CD8-positive, alpha-beta T cell (primary cell): ENCODE measurements at regions of chr17 and their contacts with region 1.

Region 1: GRCh38 chr17:64281962-64282727 is 19.1 kb upstream of the TEX2 start:
- DNase-seq: peak in 8 of 9 experiments; percentile 25 to 79 (median 51)
- ATAC-seq: peak; percentile 77
- H3K4me3 ChIP-seq: no peak overlapping the region
- H3K4me3 Mint-ChIP-seq: no peak overlapping the region
- H3K27ac ChIP-seq: no peak overlapping the region
- H3K27ac Mint-ChIP-seq: no peak overlapping the region
- H3K4me1 ChIP-seq: no peaks in the 10 kb centered on the region
- H3K4me1 Mint-ChIP-seq: no peaks in the 10 kb centered on the region
- H3K27me3 ChIP-seq: no peaks in the 10 kb centered on the region
- H3K27me3 Mint-ChIP-seq: peaks cover 3% of the 10 kb centered on the region
- CTCF ChIP-seq: peak; percentile 67

Region 2: GRCh38 chr17:63911657-63912426 is 370.3 kb before region 1 on chr17:
- CTCF ChIA-PET with region 1: interaction called, 4 read pairs
- POLR2A ChIA-PET with region 1: no interaction called
- intact Hi-C with region 1: loop called (anchors 2 to 5 kb)
- DNase-seq: peak; percentile 35 to 78 (median 72)
- ATAC-seq: peak; percentile 94
- H3K4me3 ChIP-seq: no peak overlapping the region
- H3K4me3 Mint-ChIP-seq: no peak overlapping the region
- H3K27ac ChIP-seq: no peak overlapping the region
- H3K27ac Mint-ChIP-seq: no peak overlapping the region
- H3K4me1 ChIP-seq: no peaks in the 10 kb centered on the region
- H3K4me1 Mint-ChIP-seq: peaks cover 2% of the 10 kb centered on the region
- H3K27me3 ChIP-seq: no peaks in the 10 kb centered on the region
- H3K27me3 Mint-ChIP-seq: peaks cover 4% of the 10 kb centered on the region
- CTCF ChIP-seq: peak; percentile 77

Region 3: DNA sequence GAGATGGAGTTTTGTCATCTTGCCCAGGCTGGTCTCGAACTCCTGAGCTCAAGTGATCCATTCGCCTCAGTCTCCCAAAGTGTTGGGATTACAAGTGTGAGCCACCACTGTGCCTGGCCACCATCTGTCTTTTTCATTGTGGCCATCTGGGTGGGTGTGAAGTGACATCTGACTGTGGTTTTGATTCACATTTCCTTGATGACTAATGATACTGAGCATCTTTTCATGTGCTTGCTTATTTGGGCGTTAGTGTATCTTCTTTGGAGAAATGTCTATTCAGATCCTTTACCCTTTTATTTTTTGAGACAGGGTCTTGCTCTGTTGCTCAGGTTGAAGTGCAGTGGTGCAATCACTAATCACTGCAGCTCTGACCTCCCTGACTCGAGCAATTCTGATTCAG is 98.3 kb before region 1 on chr17:
- CTCF ChIA-PET with region 1: no interaction called
- POLR2A ChIA-PET with region 1: no interaction called
- intact Hi-C with region 1: loop called in 1 of 2 experiments (anchors 10 kb)
- DNase-seq: peak in 2 of 9 experiments; percentile 8 to 9
- ATAC-seq: no peak
- H3K4me3 ChIP-seq: no peak overlapping the region
- H3K4me3 Mint-ChIP-seq: no peak overlapping the region
- H3K27ac ChIP-seq: no peak overlapping the region
- H3K27ac Mint-ChIP-seq: no peak overlapping the region
- H3K4me1 ChIP-seq: no peaks in the 10 kb centered on the region
- H3K4me1 Mint-ChIP-seq: no peaks in the 10 kb centered on the region
- H3K27me3 ChIP-seq: no peaks in the 10 kb centered on the region
- H3K27me3 Mint-ChIP-seq: no peaks in the 10 kb centered on the region
- CTCF ChIP-seq: no peak

Region 4: GRCh38 chr17:64216338-64217248 is 65.6 kb before region 1 on chr17:
- CTCF ChIA-PET with region 1: no interaction called
- POLR2A ChIA-PET with region 1: no interaction called
- intact Hi-C with region 1: loop called in 1 of 2 experiments (anchors 5 kb)
- DNase-seq: peak in 1 of 9 experiments; percentile 27
- ATAC-seq: no peak
- H3K4me3 ChIP-seq: no peak overlapping the region
- H3K4me3 Mint-ChIP-seq: no peak overlapping the region
- H3K27ac ChIP-seq: no peak overlapping the region
- H3K27ac Mint-ChIP-seq: peak overlapping the region; percentile 19
- H3K4me1 ChIP-seq: peaks cover 20% of the 10 kb centered on the region
- H3K4me1 Mint-ChIP-seq: peaks cover 26% of the 10 kb centered on the region
- H3K27me3 ChIP-seq: no peaks in the 10 kb centered on the region
- H3K27me3 Mint-ChIP-seq: no peaks in the 10 kb centered on the region
- CTCF ChIP-seq: no peak

Region 5: GRCh38 chr17:64234961-64235360 is 47.2 kb before region 1 on chr17:
- CTCF ChIA-PET with region 1: interaction called, 5 read pairs
- POLR2A ChIA-PET with region 1: no interaction called
- intact Hi-C with region 1: loop called in 1 of 2 experiments (anchors 2 kb)
- DNase-seq: no peak
- ATAC-seq: no peak
- H3K4me3 ChIP-seq: no peak overlapping the region
- H3K4me3 Mint-ChIP-seq: no peak overlapping the region
- H3K27ac ChIP-seq: no peak overlapping the region
- H3K27ac Mint-ChIP-seq: no peak overlapping the region
- H3K4me1 ChIP-seq: no peaks in the 10 kb centered on the region
- H3K4me1 Mint-ChIP-seq: peaks cover 6% of the 10 kb centered on the region
- H3K27me3 ChIP-seq: no peaks in the 10 kb centered on the region
- H3K27me3 Mint-ChIP-seq: no peaks in the 10 kb centered on the region
- CTCF ChIP-seq: no peak